ENCODE measurements at regions of chr4 and their contacts with region 1.

Region 1: DNA sequence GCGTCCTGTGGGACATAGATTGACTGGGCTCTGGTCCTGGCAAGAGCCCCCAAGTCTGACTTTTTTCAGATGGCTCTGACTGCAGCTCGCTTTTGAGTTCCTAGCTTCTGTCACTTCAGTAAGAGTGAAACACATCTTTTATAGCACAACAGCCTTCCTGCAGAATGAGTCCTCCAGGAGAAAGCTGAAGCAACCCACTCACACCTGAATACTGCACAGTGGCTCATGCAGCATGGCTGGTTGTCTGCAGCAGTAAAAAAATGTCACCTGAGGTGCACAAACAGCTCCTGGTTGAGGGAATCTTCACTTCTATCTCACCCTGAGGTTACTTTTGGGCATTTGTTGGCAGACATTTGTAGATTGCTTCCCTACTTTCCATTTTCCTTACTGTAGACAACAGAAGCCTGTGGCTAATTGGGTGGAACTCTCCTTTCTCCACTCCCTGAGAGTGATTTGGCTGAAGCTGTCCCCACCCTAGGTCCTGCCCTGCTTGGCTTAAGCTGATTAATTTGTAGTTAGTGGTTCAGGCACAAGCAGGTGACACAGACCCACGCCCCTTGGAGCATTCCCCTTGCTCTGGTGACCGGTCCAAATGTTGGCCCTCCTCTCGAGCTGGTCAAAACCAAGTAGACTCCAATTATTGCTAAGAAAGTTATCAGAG is 99.7 kb downstream of the NPNT start:
- DNase-seq: no peak
- H3K4me3 ChIP-seq: no peak overlapping the region
- H3K27ac ChIP-seq: no peak overlapping the region
- H3K4me1 ChIP-seq: no peaks in the 10 kb centered on the region
- H3K27me3 ChIP-seq: no peaks in the 10 kb centered on the region
- CTCF ChIP-seq: no peak

Region 2: GRCh38 chr4:105966029-105966428 is 28.9 kb before region 1 on chr4:
- CTCF ChIA-PET with region 1: interaction called, 4 read pairs
- POLR2A ChIA-PET with region 1: no interaction called
- intact Hi-C with region 1: loop called (anchors 1 kb)
- DNase-seq: peak; percentile 68
- H3K4me3 ChIP-seq: no peak overlapping the region
- H3K27ac ChIP-seq: no peak overlapping the region
- H3K4me1 ChIP-seq: no peaks in the 10 kb centered on the region
- H3K27me3 ChIP-seq: no peaks in the 10 kb centered on the region
- CTCF ChIP-seq: no peak

Measured in A673 (cell line).